Adrenal gland (tissue), 19 donors: ENCODE measurements at regions of chr16 and their contacts with region 1.

Region 1: DNA sequence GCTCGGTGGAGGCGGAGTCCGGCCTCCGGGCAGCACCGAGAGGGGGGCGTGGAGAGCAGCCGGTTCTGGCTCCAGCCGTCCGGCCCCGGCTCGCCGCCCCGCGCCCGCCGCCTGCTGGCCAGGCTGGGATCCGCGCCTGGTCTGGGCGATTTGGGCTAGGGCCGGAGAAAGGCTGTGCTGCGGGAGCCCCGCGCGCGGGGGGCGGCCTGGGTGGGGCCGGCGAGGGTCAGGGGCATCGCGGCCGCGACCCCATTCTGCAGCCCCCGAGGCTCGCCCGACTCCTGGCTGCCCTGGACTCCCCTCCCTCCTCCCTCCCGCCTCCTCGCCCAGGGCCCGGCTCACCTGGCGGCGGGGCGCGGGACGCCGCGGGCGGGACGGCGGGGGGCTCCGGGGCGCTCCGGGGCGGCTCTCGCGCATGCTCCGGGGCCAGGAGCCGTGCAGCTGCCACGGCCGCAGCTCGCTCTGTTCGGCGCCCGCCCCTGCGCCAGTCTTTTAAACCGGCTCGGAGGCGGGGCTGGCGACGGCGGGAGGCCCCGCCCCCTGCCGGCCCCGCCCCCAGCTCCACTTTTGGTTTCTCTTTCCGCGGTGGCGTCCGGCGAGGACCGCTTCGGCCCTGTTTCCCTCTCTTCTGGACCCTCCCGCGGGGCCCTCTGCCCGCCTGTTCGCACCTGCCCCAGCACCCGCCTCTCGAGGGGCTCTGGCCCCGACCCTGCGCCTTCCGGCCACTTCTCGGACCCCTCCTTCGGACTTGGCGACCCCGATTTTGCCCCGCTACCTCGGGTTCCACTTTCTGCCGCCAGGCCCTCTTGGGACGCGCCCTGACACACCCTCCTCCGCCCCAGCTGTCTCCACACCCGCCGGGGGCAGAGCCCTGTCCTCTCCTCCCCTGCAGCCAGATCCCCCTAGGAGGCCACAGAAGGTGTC is at the start of gene SOCS1:
- DNase-seq: peak; percentile 76 to 90 (median 85)
- H3K4me3 ChIP-seq: peak within 1 kb of the TSS; percentile 39 to 93 (median 60)
- H3K27ac ChIP-seq: peak within 1 kb of the TSS; percentile 85 to 98 (median 96)
- H3K4me1 ChIP-seq: peaks cover 0 to 38% of the 10 kb centered on the region in 2 donors
- H3K27me3 ChIP-seq: no peaks in the 10 kb centered on the region
- CTCF ChIP-seq: peak; percentile 51 to 99 (median 78)
- POLR2A ChIP-seq: peak; percentile 96
- total RNA-seq, gene SOCS1: 1.6 to 8.3 (median 4.2) TPM

Region 2: GRCh38 chr16:10964039-10964890 is 291.7 kb before region 1 on chr16:
- intact Hi-C with region 1: loop called in 1 of 2 experiments (anchors 5 kb)
- DNase-seq: peak; percentile 80 to 93 (median 87)
- H3K4me3 ChIP-seq: no peak overlapping the region
- H3K27ac ChIP-seq: peak overlapping the region in 1 of 5 donors; percentile 31
- H3K4me1 ChIP-seq: peaks cover 6 to 19% of the 10 kb centered on the region in 2 donors
- H3K27me3 ChIP-seq: no peaks in the 10 kb centered on the region
- CTCF ChIP-seq: peak; percentile 89 to 96 (median 93)
- POLR2A ChIP-seq: no peak

Region 3: DNA sequence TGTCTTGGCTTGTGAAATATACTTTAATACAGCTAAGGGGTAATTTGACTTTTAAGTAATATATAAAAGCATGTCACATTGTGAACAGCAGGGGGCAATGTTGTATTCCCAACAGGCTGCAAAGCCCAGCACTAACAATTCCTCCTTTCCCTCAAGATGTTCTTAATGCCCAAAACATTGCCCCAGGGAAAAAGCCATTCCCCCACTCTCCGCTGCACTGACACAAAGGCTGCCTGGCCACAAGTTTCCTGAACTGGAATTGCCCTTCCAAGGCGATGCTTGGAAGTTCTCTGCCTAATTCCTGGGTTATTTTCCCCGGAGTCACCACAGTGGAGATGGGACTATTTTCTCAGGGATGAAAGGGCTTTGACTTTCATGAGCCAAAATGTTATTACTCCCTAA is 284.4 kb before region 1 on chr16:
- intact Hi-C with region 1: loop called (anchors 2 to 5 kb)
- DNase-seq: peak in 5 of 7 donors; percentile 44 to 74 (median 58)
- H3K4me3 ChIP-seq: no peak overlapping the region
- H3K27ac ChIP-seq: no peak overlapping the region
- H3K4me1 ChIP-seq: no peaks in the 10 kb centered on the region
- H3K27me3 ChIP-seq: no peaks in the 10 kb centered on the region
- CTCF ChIP-seq: peak; percentile 74 to 88 (median 85)
- POLR2A ChIP-seq: no peak

Region 4: DNA sequence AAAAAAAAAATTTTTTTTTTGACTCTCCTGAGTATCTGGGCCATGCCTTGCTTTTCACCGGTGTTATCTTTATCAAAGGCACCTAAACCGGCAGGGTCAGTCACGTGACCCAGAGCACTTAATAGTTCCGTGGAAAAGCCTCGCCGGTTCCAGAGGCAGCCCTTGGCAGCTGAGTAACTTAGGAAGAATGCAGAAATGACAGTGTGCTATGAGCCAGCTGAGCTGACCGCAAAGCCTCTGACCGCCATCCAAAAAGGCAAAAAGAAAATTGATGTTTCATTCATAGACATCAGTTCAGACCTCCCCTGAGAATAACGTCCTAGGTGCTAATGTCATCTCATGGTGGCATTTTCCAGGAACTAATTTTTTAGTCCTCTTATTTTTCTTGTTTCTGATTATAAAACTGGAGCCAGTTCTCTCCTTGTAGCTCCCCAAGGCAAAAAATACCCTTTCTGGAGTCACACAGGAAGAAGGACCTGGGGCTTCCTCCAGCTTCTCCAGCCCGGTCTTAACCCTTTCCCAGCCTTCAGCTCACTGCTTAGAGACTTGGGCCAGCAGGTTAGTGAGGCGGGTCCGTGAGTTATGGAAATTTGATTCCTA is 122.6 kb before region 1 on chr16:
- intact Hi-C with region 1: loop called in 1 of 2 experiments (anchors 10 kb)
- DNase-seq: peak; percentile 86 to 97 (median 94)
- H3K4me3 ChIP-seq: no peak overlapping the region
- H3K27ac ChIP-seq: peak overlapping the region in 3 of 5 donors; percentile 45 to 82 (median 73)
- H3K4me1 ChIP-seq: peaks cover 6 to 42% of the 10 kb centered on the region in 2 donors
- H3K27me3 ChIP-seq: no peaks in the 10 kb centered on the region
- CTCF ChIP-seq: no peak
- POLR2A ChIP-seq: no peak

Region 5: GRCh38 chr16:11297492-11298142 is 41.6 kb after region 1 on chr16:
- intact Hi-C with region 1: no loop called
- DNase-seq: peak; percentile 42 to 80 (median 62)
- H3K4me3 ChIP-seq: peak overlapping the region in 1 of 4 donors; percentile 27
- H3K27ac ChIP-seq: peak overlapping the region in 1 of 5 donors; percentile 17
- H3K4me1 ChIP-seq: peaks cover 0 to 7% of the 10 kb centered on the region in 2 donors
- H3K27me3 ChIP-seq: no peaks in the 10 kb centered on the region
- CTCF ChIP-seq: peak in 2 of 6 experiments; percentile 7 to 9
- POLR2A ChIP-seq: no peak

Region 6: DNA sequence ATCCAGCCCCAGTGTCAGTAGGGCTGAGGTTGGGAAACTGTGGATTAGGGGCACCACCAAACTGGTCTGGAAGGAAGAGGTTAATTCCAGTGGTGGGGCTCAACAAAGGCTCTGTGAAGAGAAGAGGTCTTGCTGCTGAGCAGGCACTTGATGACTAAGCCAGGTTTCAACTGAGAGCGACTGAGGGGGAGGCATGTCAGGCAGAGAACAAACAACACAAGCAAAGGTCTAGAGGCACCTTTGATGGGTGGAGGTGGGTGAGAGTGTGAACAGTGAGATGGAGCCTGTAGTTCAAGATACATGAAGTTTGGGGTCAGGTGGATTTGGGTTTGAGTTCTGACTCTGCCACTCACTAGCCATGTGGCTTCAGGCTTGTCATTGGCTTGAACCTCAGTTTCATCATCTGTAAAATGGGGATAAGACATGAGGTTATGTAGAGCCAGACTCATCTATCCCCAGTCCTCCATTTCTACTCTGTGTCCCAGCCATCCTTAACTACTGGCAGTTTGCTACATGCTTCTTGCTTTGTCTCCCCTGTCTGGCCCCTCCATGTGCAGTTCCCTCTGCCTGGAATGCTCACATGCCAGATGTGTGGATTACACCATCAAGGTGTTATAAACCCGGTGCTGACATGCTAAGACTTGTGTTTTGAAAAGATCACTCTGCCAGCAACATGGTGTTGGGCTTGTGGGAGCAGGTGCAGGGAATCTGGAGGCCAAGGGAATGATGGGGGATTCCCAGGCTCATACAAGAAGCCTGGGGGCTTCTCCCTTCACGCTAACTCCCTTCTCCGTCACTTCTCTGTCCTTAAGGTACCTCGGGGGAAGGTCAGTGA is 86.2 kb after region 1 on chr16:
- intact Hi-C with region 1: no loop called
- DNase-seq: no peak
- H3K4me3 ChIP-seq: no peak overlapping the region
- H3K27ac ChIP-seq: no peak overlapping the region
- H3K4me1 ChIP-seq: peaks cover 5% of the 10 kb centered on the region in 2 donors
- H3K27me3 ChIP-seq: no peaks in the 10 kb centered on the region
- CTCF ChIP-seq: no peak
- POLR2A ChIP-seq: no peak

Region 7: GRCh38 chr16:11356573-11357331 is 100.8 kb after region 1 on chr16:
- intact Hi-C with region 1: loop called in 1 of 2 experiments (anchors 10 kb)
- DNase-seq: peak in 6 of 7 donors; percentile 56 to 81 (median 62)
- H3K4me3 ChIP-seq: no peak overlapping the region
- H3K27ac ChIP-seq: no peak overlapping the region
- H3K4me1 ChIP-seq: peaks cover 10 to 18% of the 10 kb centered on the region in 2 donors
- H3K27me3 ChIP-seq: no peaks in the 10 kb centered on the region
- CTCF ChIP-seq: peak in 5 of 6 experiments; percentile 25 to 60 (median 54)
- POLR2A ChIP-seq: no peak